GM10248 (cell line): ENCODE measurements at regions of chr11 and their contacts with region 1.

Region 1: GRCh38 chr11:63023841-63024648 is 8.4 kb upstream of the SLC22A8 start:
- DNase-seq: peak; percentile 82
- CTCF ChIP-seq: peak; percentile 98

Region 2: DNA sequence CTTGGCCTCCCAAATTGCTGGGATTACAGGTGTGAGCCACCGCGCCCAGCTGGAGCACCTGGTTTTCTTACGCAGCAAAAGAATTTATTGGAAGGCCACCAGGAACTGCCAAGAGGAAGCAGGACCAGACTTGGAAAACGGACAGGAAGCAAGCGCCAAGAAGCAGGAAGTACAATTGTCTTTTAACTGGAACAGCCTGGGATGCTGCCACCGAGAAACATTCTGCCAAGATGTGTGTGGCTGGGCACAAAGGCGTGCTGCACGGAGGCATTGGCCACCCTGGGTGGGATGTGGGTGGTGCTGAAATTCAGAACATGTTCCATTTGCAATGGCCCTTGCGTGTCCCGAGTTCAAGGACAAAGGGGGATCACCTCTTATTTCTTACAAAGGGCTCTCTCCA is 128.0 kb before region 1 on chr11:
- CTCF ChIA-PET with region 1: interaction called, 347 read pairs
- POLR2A ChIA-PET with region 1: no interaction called
- DNase-seq: no peak
- CTCF ChIP-seq: no peak

Region 3: DNA sequence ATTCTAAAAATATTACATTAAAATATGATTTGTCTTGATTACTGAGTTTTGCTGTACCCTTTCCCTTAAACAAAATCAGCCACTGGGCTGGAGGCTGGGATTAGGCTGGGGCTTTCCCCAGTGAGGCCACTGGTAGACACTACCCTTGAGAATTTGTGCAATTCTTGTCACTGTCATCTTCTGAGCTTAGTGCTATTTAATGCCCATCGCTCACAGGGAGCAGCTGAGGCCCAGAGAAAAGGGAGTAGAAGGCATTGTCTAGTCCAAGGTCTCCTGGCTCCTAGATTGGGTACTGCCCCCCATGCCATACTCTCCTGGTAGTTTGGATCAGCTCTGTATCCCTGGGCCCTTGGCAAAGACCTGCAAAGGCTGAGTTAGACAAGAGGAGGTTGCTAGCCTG is 109.6 kb before region 1 on chr11:
- CTCF ChIA-PET with region 1: interaction called, 347 read pairs
- POLR2A ChIA-PET with region 1: no interaction called
- DNase-seq: no peak
- CTCF ChIP-seq: no peak

Region 4: DNA sequence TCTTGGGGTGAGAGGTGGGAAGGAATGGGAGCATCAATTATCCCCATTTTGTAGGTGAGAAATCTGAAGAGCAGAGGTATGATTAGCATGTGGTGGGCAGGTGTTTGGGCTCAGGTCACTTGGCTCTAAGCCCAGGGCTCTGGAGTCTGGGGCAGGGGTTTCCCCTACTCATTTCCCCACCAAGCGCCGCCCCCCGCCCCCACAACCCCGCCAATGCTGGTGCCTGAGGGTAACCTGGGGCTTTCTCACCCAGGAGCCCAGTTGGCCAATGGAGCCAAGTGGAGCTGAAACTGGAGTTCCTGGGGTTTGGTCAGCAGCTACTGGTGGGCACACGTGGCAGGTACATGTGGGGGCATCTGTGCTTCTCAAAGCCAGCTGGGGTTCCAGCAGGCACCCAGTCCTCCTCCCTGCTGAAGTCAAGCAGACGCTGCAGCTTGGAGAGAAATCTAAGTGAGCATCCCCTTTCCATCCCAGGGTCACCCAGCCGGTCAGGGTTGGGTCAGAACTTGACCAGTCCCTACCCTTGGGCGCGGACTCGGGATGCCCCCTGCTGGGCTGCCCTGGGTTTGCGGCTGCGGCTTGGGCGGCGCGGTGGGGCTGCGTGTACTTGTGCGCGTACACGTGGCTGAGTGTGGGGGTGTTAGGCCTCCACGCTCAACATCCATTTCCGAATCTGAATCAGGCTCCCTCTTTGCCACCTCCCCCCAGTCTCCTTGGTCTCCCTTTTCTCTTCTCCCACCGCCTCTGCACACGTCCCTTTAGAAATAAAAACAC is 101.2 kb before region 1 on chr11:
- CTCF ChIA-PET with region 1: interaction called, 14 read pairs
- POLR2A ChIA-PET with region 1: no interaction called
- DNase-seq: peak; percentile 76
- CTCF ChIP-seq: peak; percentile 23

Region 5: GRCh38 chr11:63007920-63008319 is 16.1 kb before region 1 on chr11:
- CTCF ChIA-PET with region 1: interaction called, 10 read pairs
- POLR2A ChIA-PET with region 1: no interaction called
- DNase-seq: no peak
- CTCF ChIP-seq: no peak